Gastrocnemius medialis (tissue), 4 donors: ENCODE measurements at regions of chr3 and their contacts with region 1.

Region 1: DNA sequence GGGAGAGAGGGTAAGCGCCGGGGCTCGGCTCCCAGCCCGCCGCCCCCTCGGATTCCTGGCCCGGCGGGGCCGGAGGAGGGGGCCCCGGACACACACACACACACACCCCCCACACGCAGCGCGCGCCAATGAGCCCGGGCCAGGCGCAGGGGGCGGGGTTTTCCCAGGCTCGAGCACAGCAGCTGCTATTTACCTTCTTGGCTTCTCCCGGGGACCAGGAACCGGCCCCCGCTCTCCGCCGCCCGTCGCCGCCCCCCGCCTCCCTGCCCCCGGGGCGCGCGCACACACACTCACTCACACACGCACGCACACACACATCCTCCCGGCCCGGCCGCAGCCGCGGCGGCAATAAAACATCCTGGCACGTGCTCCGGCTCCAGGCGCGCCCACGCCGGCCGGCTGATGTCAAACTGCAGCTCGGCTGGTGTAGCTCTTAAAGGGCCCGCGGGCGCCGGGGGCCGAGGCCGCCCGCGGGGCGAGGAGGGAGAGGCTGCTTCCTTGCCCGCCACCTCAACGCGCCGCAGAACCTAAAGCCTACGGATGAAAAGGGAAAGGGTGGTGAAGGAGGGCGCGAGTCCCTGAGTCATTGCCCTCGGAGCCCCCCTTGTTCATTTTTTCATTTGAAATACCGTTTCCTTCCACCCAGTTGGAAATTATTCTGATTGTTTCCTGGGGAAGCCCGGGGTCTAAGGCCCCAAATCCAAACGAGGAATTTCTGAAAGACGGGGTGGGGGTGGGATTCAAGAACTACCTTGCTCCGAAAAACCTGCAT is 1.0 kb upstream of the HES1 start:
- DNase-seq: peak; percentile 84 to 91
- ATAC-seq: peak; percentile 51 to 60
- H3K4me3 ChIP-seq: peak overlapping the region; percentile 65 to 86 (median 75)
- H3K27ac ChIP-seq: peak overlapping the region; percentile 97 to 100 (median 99)
- H3K4me1 ChIP-seq: peaks cover 24 to 38% of the 10 kb centered on the region in 2 donors
- H3K27me3 ChIP-seq: no peaks in the 10 kb centered on the region
- CTCF ChIP-seq: no peak
- POLR2A ChIP-seq: peak; percentile 89 to 95

Region 2: DNA sequence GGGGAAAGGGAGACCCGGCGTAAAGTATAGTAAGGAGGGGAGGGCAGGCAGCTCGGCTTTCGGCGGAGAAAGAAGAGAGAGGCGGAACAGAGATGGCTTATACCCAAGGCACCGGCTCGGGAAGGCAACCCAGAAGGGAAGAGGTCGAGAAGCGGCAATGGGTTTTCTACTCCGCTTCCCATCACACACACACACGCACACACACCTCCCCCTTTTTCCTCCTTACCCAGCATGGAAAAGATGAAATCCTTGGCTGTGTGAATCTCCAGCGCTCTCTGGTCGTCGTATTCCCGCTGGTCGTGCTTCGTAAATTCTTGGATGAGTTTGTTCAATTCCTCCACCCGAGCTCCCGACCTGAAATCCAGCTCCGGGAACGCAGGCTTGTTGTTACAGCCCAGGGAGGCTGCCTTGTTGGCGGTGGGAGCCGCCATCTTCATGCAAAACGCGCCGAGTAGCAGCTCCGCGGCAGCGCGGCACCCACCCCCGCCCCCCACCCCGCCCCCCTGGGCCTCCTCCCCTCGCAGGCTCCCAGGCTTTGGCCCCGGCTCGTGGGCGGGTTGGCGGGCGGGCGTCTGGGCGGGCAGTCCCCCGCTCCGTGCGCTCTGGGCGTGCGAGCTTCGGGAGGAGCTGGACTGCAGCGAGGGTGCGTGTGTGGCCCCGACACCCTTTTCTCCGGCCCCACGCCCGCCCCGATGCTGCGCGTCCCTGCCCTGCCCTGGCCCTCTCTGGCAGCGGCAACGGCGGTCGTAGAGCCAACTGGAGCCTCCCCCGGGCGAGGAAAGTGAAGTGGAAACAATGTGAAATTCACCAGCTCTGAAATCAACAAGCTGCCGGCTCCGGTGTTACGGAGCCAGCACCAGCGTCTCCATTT is 1217.3 kb before region 1 on chr3 and contains the start of gene MB21D2:
- in situ Hi-C with region 1: no loop called
- intact Hi-C with region 1: loop called (anchors 2 kb)
- DNase-seq: peak; percentile 34 to 45
- ATAC-seq: peak; percentile 75 to 80
- H3K4me3 ChIP-seq: peak within 1 kb of the TSS; percentile 74 to 92 (median 82)
- H3K27ac ChIP-seq: peak within 1 kb of the TSS; percentile 88 to 94 (median 90)
- H3K4me1 ChIP-seq: peaks cover 11 to 24% of the 10 kb centered on the region in 2 donors
- H3K27me3 ChIP-seq: no peaks in the 10 kb centered on the region
- CTCF ChIP-seq: no peak
- POLR2A ChIP-seq: peak; percentile 38 to 59
- total RNA-seq, gene MB21D2: 1.5 to 3.8 (median 2.7) TPM

Region 3: DNA sequence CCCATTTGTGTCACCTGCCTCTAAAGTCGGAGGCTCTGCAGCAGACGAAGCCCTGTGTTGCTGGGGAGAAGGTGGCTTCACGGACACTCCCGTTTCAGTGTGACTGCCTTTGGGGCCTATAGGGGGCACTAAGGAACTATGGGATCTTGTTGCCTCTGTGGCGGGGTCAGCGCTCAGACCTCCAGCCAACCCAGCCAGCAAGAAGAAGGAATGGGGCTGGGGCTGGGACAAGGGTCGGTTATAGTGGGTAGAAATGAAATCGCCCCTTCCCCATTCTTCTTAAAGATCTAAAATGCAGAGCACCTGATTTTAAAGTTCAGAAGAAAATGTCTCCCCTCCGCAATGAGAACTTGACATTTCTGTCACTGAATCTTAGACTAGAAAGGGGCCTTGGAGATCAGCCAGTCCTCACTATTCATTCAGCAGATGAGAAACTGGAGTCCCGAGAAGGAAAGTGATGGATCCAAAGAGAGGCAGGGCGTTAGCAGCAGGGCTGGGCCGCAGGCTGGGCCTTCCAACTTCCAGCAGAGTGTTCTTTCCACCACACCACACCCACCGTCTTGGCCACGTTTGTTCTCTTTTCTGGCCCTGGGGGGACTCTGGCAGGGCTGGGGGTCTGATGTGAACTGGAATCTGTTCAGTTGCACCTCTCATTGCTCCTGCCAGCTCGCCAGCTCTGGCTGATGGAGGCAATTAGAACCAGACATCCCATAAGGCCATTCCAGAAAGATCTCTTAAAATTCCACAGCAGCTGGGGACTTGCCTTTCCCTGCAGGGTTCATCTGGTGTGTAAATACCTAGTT is 346.6 kb before region 1 on chr3:
- in situ Hi-C with region 1: loop called in 3 of 4 experiments (anchors 5 to 10 kb)
- intact Hi-C with region 1: loop called (anchors 1 kb)
- DNase-seq: peak; percentile 30 to 53
- ATAC-seq: peak; percentile 93 to 97
- H3K4me3 ChIP-seq: no peak overlapping the region
- H3K27ac ChIP-seq: no peak overlapping the region
- H3K4me1 ChIP-seq: peaks cover 7 to 8% of the 10 kb centered on the region in 2 donors
- H3K27me3 ChIP-seq: no peaks in the 10 kb centered on the region
- CTCF ChIP-seq: peak; percentile 68 to 89 (median 78)
- POLR2A ChIP-seq: no peak

Region 4: GRCh38 chr3:193982258-193982659 is 152.7 kb before region 1 on chr3:
- in situ Hi-C with region 1: loop called in 1 of 4 experiments (anchors 25 kb)
- intact Hi-C with region 1: loop called (anchors 5 kb)
- DNase-seq: peak; percentile 44 to 80
- ATAC-seq: peak; percentile 74 to 89
- H3K4me3 ChIP-seq: no peak overlapping the region
- H3K27ac ChIP-seq: peak overlapping the region in 1 of 4 donors; percentile 18
- H3K4me1 ChIP-seq: peaks cover 9 to 38% of the 10 kb centered on the region in 2 donors
- H3K27me3 ChIP-seq: no peaks in the 10 kb centered on the region
- CTCF ChIP-seq: no peak
- POLR2A ChIP-seq: no peak

Region 5: DNA sequence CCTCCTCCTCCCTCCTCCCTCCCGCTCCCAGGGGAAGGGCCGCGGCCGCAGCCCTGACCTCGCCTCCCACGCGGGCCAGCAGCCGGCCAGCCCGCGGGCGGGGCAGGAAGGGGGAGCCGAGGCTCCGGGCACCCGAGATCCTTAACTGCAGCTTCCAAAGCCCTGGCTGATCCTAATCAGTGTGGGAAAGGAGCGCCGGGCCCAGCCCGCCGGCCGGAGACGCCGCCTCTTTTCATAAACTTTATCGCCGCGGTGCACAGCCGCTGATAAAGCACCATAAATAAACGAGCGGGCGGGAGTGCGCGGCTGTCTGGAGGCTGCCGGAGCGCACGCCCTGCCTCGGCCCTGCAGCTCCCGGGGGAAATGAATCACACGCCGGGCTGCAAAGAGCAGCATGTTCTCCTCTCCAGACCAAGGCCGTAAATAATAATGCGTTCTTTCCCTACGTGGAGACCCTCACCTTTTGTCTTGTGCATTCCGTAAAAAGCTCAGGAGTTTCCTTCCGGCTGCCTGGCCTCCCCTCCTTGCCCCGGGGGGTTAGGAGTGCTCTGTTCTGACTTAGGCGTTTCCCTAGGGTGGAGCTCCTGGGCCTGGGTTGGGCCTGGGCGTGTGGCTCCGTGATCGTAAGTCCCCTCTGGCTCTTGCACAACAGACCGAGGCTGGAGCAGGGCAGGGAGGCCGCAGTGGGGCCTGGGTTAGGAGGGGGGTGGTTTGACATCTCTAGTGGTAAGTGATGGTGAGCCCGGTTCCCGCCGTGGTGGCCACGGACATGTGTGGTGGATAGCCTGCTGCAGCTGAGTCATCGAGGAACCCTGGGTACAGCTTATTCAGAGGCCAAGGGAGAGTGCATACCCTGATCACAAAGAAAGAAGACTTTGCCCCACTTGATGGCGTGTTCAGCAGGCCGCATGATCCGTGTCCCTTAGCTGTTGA is 131.6 kb before region 1 on chr3:
- in situ Hi-C with region 1: loop called in 2 of 4 experiments (anchors 5 to 25 kb)
- intact Hi-C with region 1: loop called (anchors 1 kb)
- DNase-seq: peak; percentile 74 to 85
- ATAC-seq: peak; percentile 74 to 82
- H3K4me3 ChIP-seq: peak overlapping the region; percentile 43 to 54 (median 52)
- H3K27ac ChIP-seq: peak overlapping the region; percentile 85 to 90 (median 86)
- H3K4me1 ChIP-seq: peaks cover 32 to 41% of the 10 kb centered on the region in 2 donors
- H3K27me3 ChIP-seq: no peaks in the 10 kb centered on the region
- CTCF ChIP-seq: no peak
- POLR2A ChIP-seq: peak; percentile 13 to 27

Region 6: DNA sequence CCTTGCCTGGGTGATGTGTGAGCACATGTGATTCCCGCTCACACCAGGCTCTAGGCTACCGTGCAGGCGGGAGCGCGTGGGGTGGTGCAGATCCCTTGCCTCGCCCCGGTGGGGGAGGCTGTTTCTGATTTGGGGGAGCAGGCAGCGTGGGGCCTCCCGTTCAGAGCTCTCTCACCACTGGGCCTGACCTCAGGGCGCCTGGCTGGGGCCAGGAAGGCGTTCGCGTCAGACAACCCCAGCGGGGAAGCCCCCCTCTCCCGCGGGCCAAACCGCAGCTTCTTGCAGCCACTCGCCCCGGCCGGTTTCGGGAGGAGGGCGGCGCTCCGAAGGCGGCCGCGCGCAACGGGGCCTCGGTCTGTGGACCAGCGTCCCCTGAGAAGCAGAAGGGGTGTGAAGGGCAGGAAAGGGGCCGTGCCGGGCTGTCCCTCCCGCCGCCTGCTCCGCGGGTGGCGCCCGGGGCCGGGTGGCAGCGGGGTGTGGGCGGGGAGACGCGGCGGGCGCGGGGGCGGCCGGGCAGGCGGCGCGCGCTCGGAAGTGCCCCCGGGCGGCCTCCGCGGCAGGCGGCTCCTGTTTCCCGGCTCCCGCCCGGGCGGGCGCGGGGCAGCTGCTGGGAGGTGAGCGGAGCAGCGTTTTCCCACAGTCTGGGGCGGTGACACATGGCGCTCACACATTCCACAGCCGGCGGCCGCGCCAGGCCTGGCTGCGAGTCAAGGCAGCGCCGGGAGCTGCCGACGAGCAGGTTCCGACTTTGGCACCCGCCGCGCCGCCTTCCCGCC is 64.1 kb before region 1 on chr3:
- in situ Hi-C with region 1: loop called in 1 of 4 experiments (anchors 5 kb)
- intact Hi-C with region 1: loop called (anchors 1 kb)
- DNase-seq: peak; percentile 64 to 89
- ATAC-seq: peak; percentile 83 to 88
- H3K4me3 ChIP-seq: peak overlapping the region; percentile 48 to 74 (median 70)
- H3K27ac ChIP-seq: peak overlapping the region; percentile 81 to 91 (median 85)
- H3K4me1 ChIP-seq: peaks cover 5 to 6% of the 10 kb centered on the region in 2 donors
- H3K27me3 ChIP-seq: no peaks in the 10 kb centered on the region
- CTCF ChIP-seq: peak in 1 of 5 experiments; percentile 22
- POLR2A ChIP-seq: peak; percentile 39 to 51

Region 7: DNA sequence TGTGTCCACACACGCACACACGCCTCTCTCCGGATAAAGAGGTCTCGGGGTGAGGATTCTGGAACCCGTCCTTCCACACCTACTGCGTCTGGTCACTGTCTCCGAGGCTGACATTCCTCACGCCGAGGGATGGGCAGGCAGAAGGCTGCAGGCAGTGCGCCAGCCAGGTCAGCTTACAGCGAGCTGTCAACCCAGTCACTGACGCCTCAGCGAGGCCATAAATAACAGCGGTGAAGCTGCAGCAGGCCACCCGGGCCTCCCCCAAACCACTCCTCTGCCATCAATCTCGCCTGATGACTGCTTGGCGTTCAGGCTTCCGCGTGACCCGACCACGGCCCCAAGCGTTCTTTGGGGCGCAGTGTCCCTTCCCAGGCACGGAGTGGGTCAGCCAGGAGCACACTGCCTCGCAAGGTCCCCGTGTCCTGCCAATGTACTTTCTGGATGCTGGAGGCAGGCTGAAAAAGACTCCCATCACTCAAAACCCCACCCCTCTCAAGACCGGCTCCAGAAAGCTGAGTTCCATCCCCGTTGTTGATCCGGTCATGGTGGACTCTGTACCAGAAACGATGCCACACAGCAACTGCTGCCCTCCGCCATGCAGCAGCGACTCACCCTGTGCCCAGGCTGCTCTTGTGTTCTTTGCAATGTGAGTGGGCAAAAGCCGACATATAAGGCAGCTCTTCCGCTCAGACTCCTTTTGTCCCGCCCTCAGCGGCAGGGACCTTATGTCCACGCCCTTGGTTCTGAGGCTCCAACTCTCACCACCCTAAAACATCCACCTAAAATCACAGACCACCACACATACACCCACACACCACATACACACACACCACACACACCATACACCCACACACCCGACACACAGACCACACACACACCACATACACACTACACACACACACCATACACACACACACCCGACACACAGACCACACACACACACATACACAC is 189.1 kb after region 1 on chr3:
- in situ Hi-C with region 1: loop called in 2 of 4 experiments (anchors 10 kb)
- intact Hi-C with region 1: loop called (anchors 2 kb)
- DNase-seq: peak; percentile 89 to 94
- ATAC-seq: peak; percentile 86 to 89
- H3K4me3 ChIP-seq: peak overlapping the region; percentile 33 to 51 (median 48)
- H3K27ac ChIP-seq: peak overlapping the region; percentile 85 to 92 (median 88)
- H3K4me1 ChIP-seq: peaks cover 7 to 10% of the 10 kb centered on the region in 2 donors
- H3K27me3 ChIP-seq: peaks cover 0 to 10% (median 0%) of the 10 kb centered on the region in 3 donors
- CTCF ChIP-seq: no peak
- POLR2A ChIP-seq: peak; percentile 24 to 33

Region 8: GRCh38 chr3:194364652-194365434 is 229.9 kb after region 1 on chr3:
- in situ Hi-C with region 1: no loop called
- intact Hi-C with region 1: no loop called
- DNase-seq: no peak
- ATAC-seq: peak in 1 of 2 donors; percentile 30
- H3K4me3 ChIP-seq: no peak overlapping the region
- H3K27ac ChIP-seq: no peak overlapping the region
- H3K4me1 ChIP-seq: peaks cover 0 to 12% of the 10 kb centered on the region in 2 donors
- H3K27me3 ChIP-seq: peaks cover 8 to 21% (median 10%) of the 10 kb centered on the region in 3 donors
- CTCF ChIP-seq: no peak
- POLR2A ChIP-seq: no peak